ENCODE measurements at regions of chrX and their contacts with region 1.

Region 1: DNA sequence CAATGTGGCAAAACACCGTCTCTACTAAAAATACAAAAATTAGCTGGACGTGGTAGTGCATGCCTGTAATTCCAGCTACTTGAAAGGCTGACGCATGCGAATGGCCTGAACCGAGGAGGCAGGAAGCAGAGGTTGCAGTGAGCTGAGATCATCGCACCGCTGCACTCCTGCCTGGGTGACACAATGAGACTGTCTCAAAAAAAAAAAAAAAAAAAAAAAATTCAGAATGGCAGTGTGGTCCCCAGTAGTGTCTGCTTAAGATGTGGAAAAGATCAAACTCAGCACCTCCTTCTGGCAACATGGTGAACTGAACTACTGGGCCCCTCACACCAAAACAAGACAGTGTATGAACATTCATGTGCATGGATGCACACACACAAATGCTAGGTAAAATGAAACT is 32.2 kb downstream of the SMS start:
- DNase-seq: peak; percentile 81
- H3K4me3 Mint-ChIP-seq: peak overlapping the region; percentile 25
- H3K27ac Mint-ChIP-seq: peak overlapping the region; percentile 85
- H3K4me1 Mint-ChIP-seq: peaks cover 34% of the 10 kb centered on the region
- H3K27me3 Mint-ChIP-seq: no peaks in the 10 kb centered on the region

Region 2: GRCh38 chrX:21295246-21295820 is 677.4 kb before region 1 on chrX:
- intact Hi-C with region 1: no loop called
- DNase-seq: no peak
- H3K4me3 Mint-ChIP-seq: no peak overlapping the region
- H3K27ac Mint-ChIP-seq: no peak overlapping the region
- H3K4me1 Mint-ChIP-seq: no peaks in the 10 kb centered on the region
- H3K27me3 Mint-ChIP-seq: no peaks in the 10 kb centered on the region

Region 3: DNA sequence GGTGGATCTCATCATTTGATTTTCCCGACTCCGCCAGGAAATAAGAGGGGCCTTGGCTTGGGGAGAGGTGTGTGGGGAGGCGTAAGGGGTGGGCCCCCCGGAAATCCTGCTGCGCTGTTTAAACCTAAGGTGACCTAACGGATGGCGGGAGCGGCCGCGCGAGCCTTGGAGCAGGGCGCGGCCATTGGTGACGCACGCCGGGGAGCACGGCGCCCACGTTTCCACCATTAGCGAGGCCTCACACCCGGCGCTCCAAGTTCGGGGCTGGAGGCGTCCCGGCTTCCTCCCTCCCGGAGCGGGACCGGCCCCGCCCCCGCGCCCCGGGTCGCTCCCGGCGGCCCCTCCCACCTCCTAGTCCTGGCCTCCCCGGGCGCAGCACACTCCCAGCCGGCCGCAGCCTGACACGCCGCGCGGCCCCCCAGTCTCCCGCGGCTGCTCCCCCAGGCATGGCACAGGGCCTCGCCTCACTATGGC is 32.3 kb before region 1 on chrX and contains the start of gene SMS:
- intact Hi-C with region 1: loop called (anchors 2 kb)
- DNase-seq: peak; percentile 81
- H3K4me3 Mint-ChIP-seq: peak within 1 kb of the TSS; percentile 90
- H3K27ac Mint-ChIP-seq: peak within 1 kb of the TSS; percentile 91
- H3K4me1 Mint-ChIP-seq: peaks cover 19% of the 10 kb centered on the region
- H3K27me3 Mint-ChIP-seq: no peaks in the 10 kb centered on the region
- total RNA-seq, gene SMS: 161 and 162 TPM in 2 replicates